ENCODE measurements at regions of chr10 and their contacts with region 1.

Region 1: DNA sequence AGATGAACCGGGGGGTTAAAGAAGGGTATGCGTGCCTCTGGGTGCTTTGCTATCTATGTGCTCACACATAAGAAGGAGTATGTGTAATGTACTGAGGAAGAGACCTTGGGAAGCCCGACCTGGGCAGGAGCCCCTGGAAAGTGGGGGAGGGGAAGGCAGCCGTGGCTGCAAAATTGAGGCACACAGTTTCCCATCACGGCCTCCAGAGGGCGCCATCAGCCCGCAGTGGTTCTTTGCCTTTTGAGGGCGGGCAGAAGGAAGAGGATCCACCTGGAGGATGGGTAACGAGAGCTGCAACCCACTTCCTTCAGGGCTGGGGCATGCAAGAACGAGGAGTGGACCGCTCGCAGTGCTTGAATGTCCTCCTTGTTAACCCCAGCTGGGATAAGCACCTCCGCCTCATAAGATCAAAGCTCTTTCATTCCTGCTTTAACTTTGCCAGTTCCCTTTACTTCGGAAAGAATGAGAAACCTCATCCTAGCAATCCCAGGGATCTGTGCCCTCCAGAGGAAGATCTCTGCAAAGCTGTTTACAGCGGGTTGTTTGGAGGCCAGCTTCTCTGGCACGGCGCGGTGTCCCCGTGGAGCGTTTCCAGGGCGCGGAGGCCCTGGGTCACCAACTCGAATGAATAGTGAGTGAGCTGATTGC is 77.9 kb downstream of the PCGF5 start:
- DNase-seq: peak; percentile 80
- H3K4me3 Mint-ChIP-seq: peak overlapping the region; percentile 28
- H3K27ac Mint-ChIP-seq: no peak overlapping the region
- H3K4me1 Mint-ChIP-seq: no peaks in the 10 kb centered on the region
- H3K27me3 Mint-ChIP-seq: no peaks in the 10 kb centered on the region
- CTCF ChIP-seq: peak; percentile 96

Region 2: GRCh38 chr10:90695915-90696676 is 602.3 kb before region 1 on chr10:
- CTCF ChIA-PET with region 1: no interaction called
- POLR2A ChIA-PET with region 1: no interaction called
- intact Hi-C with region 1: no loop called
- DNase-seq: no peak
- H3K4me3 Mint-ChIP-seq: no peak overlapping the region
- H3K27ac Mint-ChIP-seq: no peak overlapping the region
- H3K4me1 Mint-ChIP-seq: no peaks in the 10 kb centered on the region
- H3K27me3 Mint-ChIP-seq: no peaks in the 10 kb centered on the region
- CTCF ChIP-seq: no peak

Region 3: DNA sequence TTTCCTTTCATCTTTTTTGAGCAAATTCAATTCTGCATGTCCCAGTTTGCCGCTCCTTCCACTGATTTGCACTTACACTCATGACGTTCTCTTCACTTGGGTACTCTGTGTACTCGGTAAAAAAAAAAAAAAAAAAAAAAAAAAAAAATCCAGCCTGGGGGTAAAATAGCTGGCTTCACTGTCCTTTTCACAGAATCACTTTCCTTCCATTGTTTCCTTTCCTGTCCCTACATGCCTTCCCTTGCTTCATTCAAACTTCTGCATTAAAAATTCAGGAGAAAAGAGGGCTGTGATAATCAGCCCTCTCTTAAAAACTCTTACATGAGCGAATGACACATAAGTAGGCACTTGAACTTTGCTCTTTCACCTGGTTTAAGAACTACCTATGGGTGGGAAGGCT is 386.2 kb before region 1 on chr10:
- CTCF ChIA-PET with region 1: interaction called, 12 read pairs
- POLR2A ChIA-PET with region 1: no interaction called
- intact Hi-C with region 1: loop called (anchors 5 kb)
- DNase-seq: peak; percentile 61
- H3K4me3 Mint-ChIP-seq: peak overlapping the region; percentile 31
- H3K27ac Mint-ChIP-seq: peak overlapping the region; percentile 83
- H3K4me1 Mint-ChIP-seq: peaks cover 16% of the 10 kb centered on the region
- H3K27me3 Mint-ChIP-seq: no peaks in the 10 kb centered on the region
- CTCF ChIP-seq: no peak

Region 4: GRCh38 chr10:91316486-91316885 is 18.1 kb after region 1 on chr10:
- CTCF ChIA-PET with region 1: interaction called, 21 read pairs
- POLR2A ChIA-PET with region 1: no interaction called
- intact Hi-C with region 1: no loop called
- DNase-seq: no peak
- H3K4me3 Mint-ChIP-seq: no peak overlapping the region
- H3K27ac Mint-ChIP-seq: no peak overlapping the region
- H3K4me1 Mint-ChIP-seq: peaks cover 5% of the 10 kb centered on the region
- H3K27me3 Mint-ChIP-seq: no peaks in the 10 kb centered on the region
- CTCF ChIP-seq: no peak

Region 5: DNA sequence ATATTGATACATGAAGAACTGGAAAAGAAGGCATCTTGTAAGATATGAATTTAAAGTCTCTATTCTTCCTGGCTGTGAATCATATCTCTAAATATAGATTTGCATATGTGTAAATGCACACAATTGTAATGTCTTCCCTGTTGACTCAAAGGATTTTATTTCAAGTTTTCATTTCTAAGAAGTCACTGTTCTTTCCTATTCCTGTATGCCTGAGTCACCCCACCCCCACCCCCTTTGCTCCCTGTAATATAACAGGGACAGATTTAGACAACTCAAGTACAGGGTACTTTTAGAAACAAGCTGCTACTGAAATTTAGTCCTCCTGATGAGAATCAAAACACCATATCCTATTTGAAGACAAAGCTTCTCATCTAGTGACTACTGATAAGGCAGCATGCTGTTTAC is 68.8 kb after region 1 on chr10:
- CTCF ChIA-PET with region 1: interaction called, 60 read pairs
- POLR2A ChIA-PET with region 1: interaction called, 5 read pairs
- intact Hi-C with region 1: loop called (anchors 1 kb)
- DNase-seq: no peak
- H3K4me3 Mint-ChIP-seq: no peak overlapping the region
- H3K27ac Mint-ChIP-seq: no peak overlapping the region
- H3K4me1 Mint-ChIP-seq: peaks cover 9% of the 10 kb centered on the region
- H3K27me3 Mint-ChIP-seq: no peaks in the 10 kb centered on the region
- CTCF ChIP-seq: no peak

Region 6: DNA sequence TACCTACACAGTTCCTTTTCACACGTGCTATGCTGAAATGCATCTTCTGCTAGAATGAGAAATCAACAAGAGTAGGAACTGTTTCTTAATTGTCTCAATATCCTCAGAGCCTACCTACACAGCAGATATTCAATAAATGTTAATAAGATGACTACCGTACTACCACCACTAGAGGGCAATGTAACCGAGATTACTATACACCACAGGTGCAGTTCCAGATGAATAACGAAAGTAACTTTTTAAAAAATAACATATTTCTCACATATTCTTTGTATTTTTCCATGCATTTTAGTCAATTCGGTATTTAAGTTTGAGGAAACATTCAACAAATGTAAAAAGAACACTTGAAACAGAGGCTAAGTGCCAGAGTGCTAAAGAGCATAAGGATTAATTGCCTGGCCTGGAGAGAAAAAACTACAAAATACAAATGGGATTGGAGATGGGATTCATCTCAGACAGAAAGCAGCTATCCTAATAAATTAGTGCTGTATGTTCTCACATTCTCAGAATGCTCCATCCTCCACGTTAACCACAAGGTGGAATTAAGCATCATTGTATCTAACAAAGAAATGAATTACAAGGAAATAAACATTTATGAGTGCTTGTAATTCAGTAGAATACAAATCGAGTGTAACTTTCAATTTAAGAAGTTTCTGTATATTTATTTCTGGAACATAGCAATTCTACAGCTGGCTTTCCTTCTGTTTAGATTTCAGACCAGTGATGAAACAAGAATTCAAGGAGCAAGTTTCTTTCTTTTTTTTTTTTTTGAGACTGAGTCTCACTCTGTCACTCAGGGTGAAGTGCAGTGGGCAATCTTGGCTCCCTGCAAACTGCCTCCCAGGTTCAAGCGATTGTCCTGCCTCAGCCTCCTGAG is 91.5 kb after region 1 on chr10:
- CTCF ChIA-PET with region 1: interaction called, 23 read pairs
- POLR2A ChIA-PET with region 1: no interaction called
- intact Hi-C with region 1: loop called (anchors 5 kb)
- DNase-seq: peak; percentile 77
- H3K4me3 Mint-ChIP-seq: no peak overlapping the region
- H3K27ac Mint-ChIP-seq: no peak overlapping the region
- H3K4me1 Mint-ChIP-seq: no peaks in the 10 kb centered on the region
- H3K27me3 Mint-ChIP-seq: peaks cover 42% of the 10 kb centered on the region
- CTCF ChIP-seq: peak; percentile 60

Region 7: GRCh38 chr10:91551856-91552255 is 253.5 kb after region 1 on chr10:
- CTCF ChIA-PET with region 1: no interaction called
- POLR2A ChIA-PET with region 1: no interaction called
- intact Hi-C with region 1: loop called (anchors 2 kb)
- DNase-seq: peak; percentile 45
- H3K4me3 Mint-ChIP-seq: no peak overlapping the region
- H3K27ac Mint-ChIP-seq: no peak overlapping the region
- H3K4me1 Mint-ChIP-seq: peaks cover 17% of the 10 kb centered on the region
- H3K27me3 Mint-ChIP-seq: no peaks in the 10 kb centered on the region
- CTCF ChIP-seq: peak; percentile 35

Region 8: DNA sequence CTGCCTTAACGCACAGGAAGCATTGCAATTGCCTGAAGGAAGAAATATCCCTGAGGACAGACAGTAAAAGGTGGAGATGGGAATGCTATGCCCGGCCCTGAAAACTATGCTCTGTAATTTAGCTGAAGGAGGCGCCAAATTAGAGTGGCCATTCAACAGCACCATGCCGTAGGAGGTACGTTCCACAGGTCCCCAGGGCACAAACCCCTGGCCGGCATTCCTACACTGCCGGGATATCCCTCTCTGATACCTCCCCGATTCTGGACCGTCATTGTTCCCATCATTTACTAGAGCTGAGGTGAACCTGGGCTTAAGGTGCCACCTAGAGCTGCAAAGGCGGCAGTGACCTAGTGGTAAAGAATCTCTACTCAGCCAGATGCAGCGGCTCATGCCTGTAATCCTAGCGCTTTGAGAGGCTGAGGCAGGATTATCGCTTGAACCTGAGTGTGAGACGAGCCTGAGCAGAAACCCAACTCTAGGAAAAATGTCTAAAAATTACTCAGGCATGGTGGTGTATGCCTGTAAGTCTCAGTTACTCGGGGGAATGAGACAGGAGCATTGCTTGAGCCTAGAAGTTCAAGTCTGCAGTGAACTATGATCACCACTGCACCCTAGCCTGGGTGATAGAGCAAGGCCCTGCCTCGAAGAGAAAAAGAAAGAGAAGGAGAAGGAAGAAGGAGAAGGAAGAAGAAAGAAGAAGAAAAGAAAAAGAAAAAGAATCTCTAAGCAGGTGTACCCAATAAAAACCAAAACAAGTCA is 446.9 kb after region 1 on chr10:
- CTCF ChIA-PET with region 1: interaction called, 8 read pairs
- POLR2A ChIA-PET with region 1: no interaction called
- intact Hi-C with region 1: loop called (anchors 1 kb)
- DNase-seq: peak; percentile 76
- H3K4me3 Mint-ChIP-seq: no peak overlapping the region
- H3K27ac Mint-ChIP-seq: no peak overlapping the region
- H3K4me1 Mint-ChIP-seq: no peaks in the 10 kb centered on the region
- H3K27me3 Mint-ChIP-seq: peaks cover 48% of the 10 kb centered on the region
- CTCF ChIP-seq: peak; percentile 59